ENCODE measurements at regions of chr2 and their contacts with region 1.

Region 1: GRCh38 chr2:108637304-108637669 is 82.0 kb upstream of the RANBP2 start:
- DNase-seq: no peak
- ATAC-seq: peak; percentile 10
- H3K4me3 ChIP-seq: no peak overlapping the region
- H3K27ac ChIP-seq: no peak overlapping the region
- H3K4me1 ChIP-seq: peaks cover 33% of the 10 kb centered on the region
- H3K27me3 ChIP-seq: no peaks in the 10 kb centered on the region
- CTCF ChIP-seq: no peak

Region 2: GRCh38 chr2:108351889-108352288 is 285.4 kb before region 1 on chr2:
- CTCF ChIA-PET with region 1: no interaction called
- POLR2A ChIA-PET with region 1: no interaction called
- intact Hi-C with region 1: loop called (anchors 1 kb)
- DNase-seq: no peak
- ATAC-seq: no peak
- H3K4me3 ChIP-seq: no peak overlapping the region
- H3K27ac ChIP-seq: no peak overlapping the region
- H3K4me1 ChIP-seq: no peaks in the 10 kb centered on the region
- H3K27me3 ChIP-seq: no peaks in the 10 kb centered on the region
- CTCF ChIP-seq: no peak

Region 3: DNA sequence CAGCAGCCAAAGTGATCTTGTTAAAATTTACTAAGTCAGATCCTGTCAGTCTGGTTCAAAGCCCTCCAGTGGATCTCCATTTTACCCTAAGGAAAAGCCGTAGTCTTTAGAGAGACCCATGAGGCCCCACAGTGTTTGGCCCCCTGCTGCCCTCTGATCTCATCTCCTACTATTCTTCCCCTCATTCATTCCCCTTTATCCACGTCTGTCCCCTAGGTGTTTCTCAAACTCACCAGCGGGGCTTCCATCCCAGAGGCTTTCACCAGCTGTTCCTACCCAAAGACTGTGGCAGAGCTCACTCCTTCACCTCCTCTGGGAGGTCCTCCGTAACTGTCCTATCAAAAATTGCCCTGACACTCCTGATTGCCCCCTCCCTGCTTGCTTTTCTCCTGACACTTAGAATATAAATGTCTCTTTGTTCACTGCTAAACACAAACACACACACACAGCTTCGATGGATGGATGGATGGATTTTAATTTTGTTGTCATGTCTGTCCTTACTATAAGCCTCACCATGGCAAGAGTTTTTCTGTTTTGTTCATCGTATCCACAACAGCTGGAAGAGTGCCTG is 77.0 kb before region 1 on chr2:
- CTCF ChIA-PET with region 1: no interaction called
- POLR2A ChIA-PET with region 1: no interaction called
- intact Hi-C with region 1: no loop called
- DNase-seq: no peak
- ATAC-seq: no peak
- H3K4me3 ChIP-seq: no peak overlapping the region
- H3K27ac ChIP-seq: no peak overlapping the region
- H3K4me1 ChIP-seq: no peaks in the 10 kb centered on the region
- H3K27me3 ChIP-seq: no peaks in the 10 kb centered on the region
- CTCF ChIP-seq: no peak

Region 4: GRCh38 chr2:108607706-108608301 is 29.5 kb before region 1 on chr2:
- CTCF ChIA-PET with region 1: interaction called, 12 read pairs
- POLR2A ChIA-PET with region 1: no interaction called
- intact Hi-C with region 1: loop called (anchors 1 kb)
- DNase-seq: peak; percentile 60
- ATAC-seq: peak; percentile 65
- H3K4me3 ChIP-seq: no peak overlapping the region
- H3K27ac ChIP-seq: no peak overlapping the region
- H3K4me1 ChIP-seq: peaks cover 14% of the 10 kb centered on the region
- H3K27me3 ChIP-seq: no peaks in the 10 kb centered on the region
- CTCF ChIP-seq: peak; percentile 80

Region 5: DNA sequence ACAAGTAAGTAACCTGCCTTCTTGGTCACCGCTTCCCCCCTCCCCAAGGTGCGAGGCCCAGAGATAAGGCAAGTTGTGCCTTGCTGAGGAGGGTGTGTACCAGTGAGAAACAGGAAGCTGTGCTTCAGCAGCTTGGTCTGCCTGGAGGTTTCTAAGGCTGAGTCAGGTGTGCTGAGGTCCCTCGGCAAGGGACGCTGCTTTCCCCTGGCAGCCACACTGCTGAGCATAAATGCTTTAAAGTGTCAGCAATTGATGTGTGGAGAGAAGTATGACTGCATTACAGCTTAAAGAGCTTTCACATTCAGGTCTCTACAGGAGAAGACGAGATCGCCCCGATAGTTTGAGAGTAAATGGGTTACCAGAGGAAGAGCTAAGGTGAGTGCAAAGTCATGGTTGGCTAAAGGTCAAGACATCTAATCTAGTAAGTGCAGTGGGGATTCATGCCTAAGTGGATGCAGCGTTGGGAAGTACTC is 16.2 kb before region 1 on chr2:
- CTCF ChIA-PET with region 1: interaction called, 17 read pairs
- POLR2A ChIA-PET with region 1: interaction called, 4 read pairs
- intact Hi-C with region 1: no loop called
- DNase-seq: peak; percentile 73
- ATAC-seq: peak; percentile 83
- H3K4me3 ChIP-seq: no peak overlapping the region
- H3K27ac ChIP-seq: peak overlapping the region; percentile 42
- H3K4me1 ChIP-seq: peaks cover 56% of the 10 kb centered on the region
- H3K27me3 ChIP-seq: no peaks in the 10 kb centered on the region
- CTCF ChIP-seq: no peak

Region 6: DNA sequence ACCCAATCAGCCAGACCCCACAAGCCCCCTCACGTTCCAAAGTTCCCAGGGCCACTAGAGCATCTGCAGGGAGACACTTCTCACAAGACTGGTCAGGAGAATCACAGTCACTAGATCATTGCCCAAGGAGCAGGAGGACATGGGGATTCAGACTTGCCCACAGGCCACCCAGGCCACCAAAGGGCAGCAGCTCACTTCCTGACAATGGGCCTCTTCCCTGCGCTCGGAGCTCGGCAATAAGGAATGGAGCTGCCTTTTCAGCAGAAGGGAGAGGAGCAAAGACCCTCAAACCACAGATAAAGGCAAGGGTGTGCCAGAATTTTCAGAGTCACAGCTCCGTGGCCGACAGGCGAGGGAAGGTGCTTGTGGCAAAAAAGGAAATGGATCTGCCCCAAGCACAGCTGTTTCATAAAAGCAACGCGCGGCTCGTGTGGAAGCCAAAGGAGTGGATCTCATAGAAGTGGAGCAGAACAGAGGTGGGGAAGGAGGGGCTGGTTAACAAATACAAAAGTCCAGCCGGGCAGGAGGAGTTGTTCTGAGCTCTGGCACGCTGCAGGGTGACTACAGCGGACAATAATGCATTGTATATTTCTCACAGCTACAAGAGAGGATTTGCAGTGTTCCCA is 279.6 kb after region 1 on chr2:
- CTCF ChIA-PET with region 1: no interaction called
- POLR2A ChIA-PET with region 1: no interaction called
- intact Hi-C with region 1: no loop called
- DNase-seq: no peak
- ATAC-seq: no peak
- H3K4me3 ChIP-seq: no peak overlapping the region
- H3K27ac ChIP-seq: no peak overlapping the region
- H3K4me1 ChIP-seq: peaks cover 10% of the 10 kb centered on the region
- H3K27me3 ChIP-seq: no peaks in the 10 kb centered on the region
- CTCF ChIP-seq: no peak

Region 7: DNA sequence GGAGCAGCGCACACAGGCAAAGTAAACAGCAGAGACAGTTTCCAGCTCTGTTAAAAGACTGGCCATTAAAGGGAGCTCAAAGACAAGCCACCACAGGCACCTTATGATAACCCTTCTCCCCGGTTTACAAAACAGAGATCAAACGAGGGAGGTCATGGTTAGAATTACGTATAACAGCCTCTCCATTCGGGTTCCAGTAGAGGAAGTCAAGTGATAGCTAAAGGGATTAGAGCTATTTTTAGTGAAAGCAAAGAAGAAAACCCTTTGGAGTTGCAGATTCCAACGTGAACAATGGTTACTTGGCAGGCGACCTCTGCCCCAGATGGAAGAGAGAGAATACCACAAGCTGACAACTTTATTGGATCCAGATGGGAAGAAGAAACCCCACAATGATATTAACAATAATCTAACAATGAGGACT is 382.9 kb after region 1 on chr2:
- CTCF ChIA-PET with region 1: no interaction called
- POLR2A ChIA-PET with region 1: no interaction called
- intact Hi-C with region 1: no loop called
- DNase-seq: no peak
- ATAC-seq: no peak
- H3K4me3 ChIP-seq: no peak overlapping the region
- H3K27ac ChIP-seq: no peak overlapping the region
- H3K4me1 ChIP-seq: 0 out of 2 replicates have a peak, but pooled peaks cover 7% of the 10 kb centered on the region
- H3K27me3 ChIP-seq: peaks cover 12% of the 10 kb centered on the region; the same call in 1 of the 2 replicates
- CTCF ChIP-seq: no peak

Measured in PC-3 (cell line).